HEK293 (cell line): ENCODE measurements at regions of chrX and their contacts with region 1.

Region 1: GRCh38 chrX:114959729-114960128 is 57.7 kb downstream of the IL13RA2 start:
- H3K4me3 ChIP-seq: no peak overlapping the region
- H3K27ac ChIP-seq: no peak overlapping the region
- H3K4me1 ChIP-seq: no peaks in the 10 kb centered on the region
- CTCF ChIP-seq: no peak

Region 2: DNA sequence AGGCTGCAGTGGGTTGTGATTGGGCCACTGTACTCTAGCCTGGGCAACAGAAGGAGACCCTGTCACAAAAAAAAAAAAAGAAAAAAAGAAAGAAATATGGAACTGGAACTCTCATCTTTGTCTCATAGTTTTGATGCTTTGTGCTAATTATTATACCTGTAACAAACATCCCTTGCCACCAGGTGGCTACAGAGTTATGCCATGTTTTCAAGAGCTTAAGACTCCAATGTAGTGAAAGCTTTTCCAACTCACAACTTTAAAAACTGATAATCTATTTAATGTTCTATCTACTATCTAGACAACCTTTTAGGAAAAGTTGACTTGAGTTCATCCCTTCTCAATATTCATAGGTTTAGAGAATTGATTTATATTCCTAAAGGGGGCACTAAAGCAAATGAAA is 333.4 kb before region 1 on chrX:
- CTCF ChIA-PET with region 1: interaction called, 28 read pairs
- POLR2A ChIA-PET with region 1: interaction called, 4 read pairs
- H3K4me3 ChIP-seq: no peak overlapping the region
- H3K27ac ChIP-seq: no peak overlapping the region
- H3K4me1 ChIP-seq: no peaks in the 10 kb centered on the region
- CTCF ChIP-seq: no peak

Region 3: DNA sequence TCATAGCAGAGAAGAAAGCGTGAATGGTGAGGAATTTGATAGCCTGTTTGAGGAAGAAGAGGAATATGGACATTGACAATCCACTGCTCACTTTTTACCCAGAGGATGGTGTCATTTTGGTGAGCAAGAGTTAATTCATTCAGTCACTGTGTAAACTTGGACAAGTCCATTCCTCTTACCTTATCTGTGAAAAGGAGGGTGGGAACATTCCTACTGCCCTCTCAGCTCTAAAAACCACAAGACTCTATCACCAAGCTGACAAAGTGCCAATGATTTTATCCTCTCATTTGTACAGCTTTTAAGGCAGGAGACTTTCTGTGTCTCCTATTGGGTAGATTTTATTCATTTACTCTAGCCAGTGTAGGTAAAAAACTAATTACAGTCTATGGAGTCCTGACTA is 433.5 kb after region 1 on chrX:
- CTCF ChIA-PET with region 1: no interaction called
- POLR2A ChIA-PET with region 1: no interaction called
- H3K4me3 ChIP-seq: no peak overlapping the region
- H3K27ac ChIP-seq: no peak overlapping the region
- H3K4me1 ChIP-seq: no peaks in the 10 kb centered on the region
- CTCF ChIP-seq: no peak